Activated CD8-positive, alpha-beta T cell treated with anti-CD3 and anti-CD28 coated beads, Interleukin-2, amount 10 ng/mL, durations not matched to agents 7 days and 5 days (primary cell): ENCODE measurements at regions of chr1 and their contacts with region 1.

Region 1: DNA sequence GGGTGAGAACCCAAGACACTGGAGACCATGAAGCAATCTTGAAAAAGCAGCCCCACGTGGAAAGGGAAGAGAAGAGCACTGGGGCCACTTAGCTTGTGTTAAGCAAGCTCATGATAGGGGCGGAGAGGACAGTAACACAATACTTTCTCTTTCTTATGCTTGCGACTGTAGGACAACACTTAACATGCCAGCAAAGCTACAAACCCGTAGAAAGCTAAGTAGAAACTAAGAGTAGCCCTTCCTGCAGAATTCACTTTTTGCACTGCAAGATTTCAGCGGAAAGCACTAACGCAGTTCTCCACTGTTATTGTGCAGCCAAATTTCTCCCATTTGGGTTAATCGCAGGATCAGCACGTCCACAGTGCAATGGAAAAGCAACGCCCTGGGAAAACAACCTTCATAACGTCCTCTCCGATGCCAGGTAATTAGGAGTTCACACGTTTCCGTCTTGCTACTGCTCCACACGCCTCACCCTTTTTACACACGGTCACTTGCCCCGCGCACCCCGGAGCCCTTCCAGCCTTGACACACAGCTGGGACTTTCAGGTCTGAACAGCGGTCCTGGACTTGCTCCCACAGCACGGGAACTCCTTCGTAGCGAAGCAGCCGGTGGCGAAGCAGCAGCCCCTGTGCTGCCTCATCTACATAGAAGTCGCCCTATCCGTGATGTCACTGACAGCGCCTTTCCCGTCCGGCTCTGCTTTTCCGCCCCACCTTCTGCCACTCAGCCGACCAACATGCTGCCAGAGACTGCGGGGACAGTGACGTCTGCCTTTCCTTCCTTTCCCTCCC is 148.6 kb downstream of the PPIAL4G start:
- DNase-seq: peak; percentile 85
- ATAC-seq: peak; percentile 91
- H3K4me3 Mint-ChIP-seq: peak overlapping the region; percentile 92
- H3K27ac Mint-ChIP-seq: peak overlapping the region; percentile 99
- H3K4me1 Mint-ChIP-seq: peaks cover 34% of the 10 kb centered on the region
- H3K27me3 Mint-ChIP-seq: peaks cover 43% of the 10 kb centered on the region

Region 2: GRCh38 chr1:148307583-148308190 is 26.8 kb before region 1 on chr1:
- CTCF ChIA-PET with region 1: no interaction called
- POLR2A ChIA-PET with region 1: interaction called, 16 read pairs
- DNase-seq: no peak
- ATAC-seq: no peak
- H3K4me3 Mint-ChIP-seq: no peak overlapping the region
- H3K27ac Mint-ChIP-seq: no peak overlapping the region
- H3K4me1 Mint-ChIP-seq: peaks cover 27% of the 10 kb centered on the region
- H3K27me3 Mint-ChIP-seq: peaks cover 57% of the 10 kb centered on the region

Region 3: DNA sequence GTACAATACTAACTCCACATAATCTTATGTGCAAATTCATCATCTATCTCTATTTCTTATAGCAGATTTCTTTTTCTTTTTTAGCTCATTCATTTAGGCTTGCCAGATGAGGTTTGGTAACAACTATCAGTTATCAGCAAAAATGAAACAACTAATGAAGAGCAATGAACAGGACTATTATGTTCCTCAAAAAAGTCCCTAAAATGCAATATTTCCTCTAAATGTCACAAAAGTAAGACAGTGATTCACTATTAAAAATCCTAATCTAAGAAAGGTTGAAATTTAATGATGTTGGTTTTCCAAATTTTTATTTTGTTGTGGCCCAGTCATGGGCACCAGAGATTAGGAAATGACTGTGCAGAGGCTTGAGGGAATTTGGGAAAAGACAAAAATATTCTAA is 13.2 kb after region 1 on chr1:
- CTCF ChIA-PET with region 1: interaction called, 11 read pairs
- POLR2A ChIA-PET with region 1: interaction called, 15 read pairs
- DNase-seq: no peak
- ATAC-seq: no peak
- H3K4me3 Mint-ChIP-seq: no peak overlapping the region
- H3K27ac Mint-ChIP-seq: no peak overlapping the region
- H3K4me1 Mint-ChIP-seq: peaks cover 3% of the 10 kb centered on the region
- H3K27me3 Mint-ChIP-seq: peaks cover 58% of the 10 kb centered on the region

Region 4: GRCh38 chr1:148362626-148363438 is 28.3 kb after region 1 on chr1:
- CTCF ChIA-PET with region 1: no interaction called
- POLR2A ChIA-PET with region 1: interaction called, 23 read pairs
- DNase-seq: peak; percentile 45
- ATAC-seq: peak; percentile 63
- H3K4me3 Mint-ChIP-seq: peak overlapping the region; percentile 73
- H3K27ac Mint-ChIP-seq: peak overlapping the region; percentile 33
- H3K4me1 Mint-ChIP-seq: peaks cover 52% of the 10 kb centered on the region
- H3K27me3 Mint-ChIP-seq: peaks cover 20% of the 10 kb centered on the region

Region 5: DNA sequence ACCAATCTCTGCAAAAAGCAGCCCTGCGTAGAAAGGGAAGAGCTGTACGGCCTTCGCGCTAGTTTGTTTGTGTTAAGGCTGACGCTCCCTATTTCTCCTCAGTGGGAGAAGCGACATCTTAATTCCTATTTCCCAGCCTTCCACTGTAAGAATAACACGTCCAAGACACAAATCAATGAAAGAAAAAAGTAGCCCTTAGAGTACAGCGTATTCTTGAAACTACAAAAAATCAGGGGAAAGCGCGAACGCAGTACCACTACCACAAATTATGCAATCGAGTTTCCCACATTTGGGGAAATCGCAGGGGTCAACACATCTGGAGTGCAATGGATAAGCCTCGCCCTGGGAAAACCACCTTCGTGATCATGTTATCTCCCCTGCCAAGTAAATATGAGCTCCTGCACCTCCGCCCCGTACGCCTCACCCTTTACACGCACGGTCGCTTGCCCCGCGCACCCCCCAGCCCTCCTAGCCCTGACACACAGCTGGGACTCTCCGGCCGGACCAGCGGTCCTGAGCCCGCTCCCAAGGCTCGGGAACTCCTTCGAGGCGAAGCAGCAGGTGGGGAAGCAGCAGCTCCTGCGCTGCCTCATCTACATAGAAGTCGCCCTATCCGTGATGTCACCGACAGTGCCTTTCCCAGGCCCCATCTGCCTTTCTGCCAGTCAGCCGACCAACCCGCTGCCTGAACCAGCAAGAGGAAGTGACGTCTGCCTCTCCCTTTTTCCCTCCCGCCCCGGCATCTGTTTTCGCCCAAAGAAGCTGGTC is 53.9 kb after region 1 on chr1:
- CTCF ChIA-PET with region 1: no interaction called
- POLR2A ChIA-PET with region 1: interaction called, 23 read pairs
- DNase-seq: peak; percentile 93
- ATAC-seq: peak; percentile 92
- H3K4me3 Mint-ChIP-seq: peak overlapping the region; percentile 93
- H3K27ac Mint-ChIP-seq: peak overlapping the region; percentile 99
- H3K4me1 Mint-ChIP-seq: peaks cover 51% of the 10 kb centered on the region
- H3K27me3 Mint-ChIP-seq: no peaks in the 10 kb centered on the region